PC-3 (cell line): ENCODE measurements at regions of chr2 and their contacts with region 1.

Region 1: DNA sequence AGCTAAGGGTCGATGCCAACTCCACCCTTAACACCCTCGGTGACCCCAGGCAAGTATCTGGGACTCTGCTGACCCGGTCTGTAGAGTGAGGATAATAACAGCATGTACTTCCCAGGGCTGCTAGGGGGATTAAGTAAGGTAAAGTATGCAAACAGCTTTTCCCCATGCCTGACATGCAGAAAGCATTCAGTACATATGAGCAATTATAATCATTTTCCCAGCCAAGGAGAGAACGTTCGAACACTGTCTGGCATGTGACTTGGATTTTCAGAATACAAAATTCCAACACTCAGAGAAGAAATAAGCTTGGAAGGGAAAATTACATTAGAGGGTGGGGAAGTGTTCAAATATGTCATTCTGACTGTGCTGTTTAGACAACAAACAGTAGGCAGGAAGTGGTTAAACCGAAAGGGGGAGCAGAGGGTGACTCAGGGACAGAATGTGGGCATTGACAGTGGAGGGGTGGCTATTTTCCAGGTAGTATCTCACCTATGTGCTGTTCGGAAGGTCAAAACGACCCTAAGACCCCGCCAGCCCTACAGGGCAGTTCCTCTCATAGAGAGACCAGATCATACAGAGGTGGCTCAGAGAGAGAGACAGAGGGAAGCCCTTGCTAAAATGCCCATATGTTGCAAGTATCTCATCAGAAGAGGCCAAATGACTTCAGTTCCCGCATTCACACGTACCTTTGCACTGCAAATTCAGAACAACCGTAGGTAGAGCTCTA is 14.9 kb downstream of the ASPRV1 start:
- DNase-seq: peak; percentile 95
- ATAC-seq: peak; percentile 85
- H3K4me3 ChIP-seq: peak overlapping the region; percentile 41
- H3K27ac ChIP-seq: peak overlapping the region; percentile 98
- H3K4me1 ChIP-seq: peaks cover 53% of the 10 kb centered on the region
- H3K27me3 ChIP-seq: no peaks in the 10 kb centered on the region
- CTCF ChIP-seq: no peak

Region 2: GRCh38 chr2:69923116-69923515 is 23.4 kb before region 1 on chr2:
- CTCF ChIA-PET with region 1: no interaction called
- POLR2A ChIA-PET with region 1: no interaction called
- intact Hi-C with region 1: no loop called
- DNase-seq: no peak
- ATAC-seq: no peak
- H3K4me3 ChIP-seq: no peak overlapping the region
- H3K27ac ChIP-seq: no peak overlapping the region
- H3K4me1 ChIP-seq: peaks cover 7% of the 10 kb centered on the region
- H3K27me3 ChIP-seq: no peaks in the 10 kb centered on the region
- CTCF ChIP-seq: no peak

Region 3: DNA sequence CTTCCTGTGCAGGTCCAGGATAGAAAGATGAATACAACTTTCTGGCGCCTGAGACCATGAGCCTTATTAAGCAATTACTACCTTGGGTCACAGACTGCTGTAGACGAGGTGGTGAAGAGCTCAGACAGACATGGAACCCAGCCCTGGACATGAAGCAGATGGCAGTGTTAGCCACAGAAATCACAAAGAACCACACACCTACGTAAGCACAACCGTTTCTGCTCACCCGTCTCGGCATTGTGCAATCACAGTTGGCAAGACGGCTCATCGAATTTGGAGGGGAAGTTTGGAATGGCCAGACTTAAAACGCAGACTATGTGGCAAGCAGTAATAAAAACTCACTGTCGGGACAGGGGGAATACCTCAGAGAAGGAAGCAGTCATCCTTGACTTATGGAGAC is 39.2 kb after region 1 on chr2:
- CTCF ChIA-PET with region 1: no interaction called
- POLR2A ChIA-PET with region 1: no interaction called
- intact Hi-C with region 1: loop called (anchors 2 kb)
- DNase-seq: no peak
- ATAC-seq: no peak
- H3K4me3 ChIP-seq: no peak overlapping the region
- H3K27ac ChIP-seq: no peak overlapping the region
- H3K4me1 ChIP-seq: peaks cover 17% of the 10 kb centered on the region
- H3K27me3 ChIP-seq: no peaks in the 10 kb centered on the region
- CTCF ChIP-seq: no peak

Region 4: GRCh38 chr2:69997015-69997830 is 50.7 kb after region 1 on chr2:
- CTCF ChIA-PET with region 1: no interaction called
- POLR2A ChIA-PET with region 1: interaction called, 6 read pairs
- intact Hi-C with region 1: loop called (anchors 2 kb)
- DNase-seq: peak; percentile 94
- ATAC-seq: peak; percentile 95
- H3K4me3 ChIP-seq: peak overlapping the region; percentile 37; the same call in 1 of the 2 replicates
- H3K27ac ChIP-seq: peak overlapping the region; percentile 91
- H3K4me1 ChIP-seq: peaks cover 37% of the 10 kb centered on the region
- H3K27me3 ChIP-seq: no peaks in the 10 kb centered on the region
- CTCF ChIP-seq: peak; percentile 25; the same call in 1 of the 2 replicates

Region 5: GRCh38 chr2:70029814-70030409 is 83.4 kb after region 1 on chr2:
- CTCF ChIA-PET with region 1: no interaction called
- POLR2A ChIA-PET with region 1: no interaction called
- intact Hi-C with region 1: no loop called
- DNase-seq: no peak
- ATAC-seq: no peak
- H3K4me3 ChIP-seq: no peak overlapping the region
- H3K27ac ChIP-seq: no peak overlapping the region
- H3K4me1 ChIP-seq: no peaks in the 10 kb centered on the region
- H3K27me3 ChIP-seq: no peaks in the 10 kb centered on the region
- CTCF ChIP-seq: no peak